ENCODE measurements at regions of chr11 and their contacts with region 1.

Region 1: DNA sequence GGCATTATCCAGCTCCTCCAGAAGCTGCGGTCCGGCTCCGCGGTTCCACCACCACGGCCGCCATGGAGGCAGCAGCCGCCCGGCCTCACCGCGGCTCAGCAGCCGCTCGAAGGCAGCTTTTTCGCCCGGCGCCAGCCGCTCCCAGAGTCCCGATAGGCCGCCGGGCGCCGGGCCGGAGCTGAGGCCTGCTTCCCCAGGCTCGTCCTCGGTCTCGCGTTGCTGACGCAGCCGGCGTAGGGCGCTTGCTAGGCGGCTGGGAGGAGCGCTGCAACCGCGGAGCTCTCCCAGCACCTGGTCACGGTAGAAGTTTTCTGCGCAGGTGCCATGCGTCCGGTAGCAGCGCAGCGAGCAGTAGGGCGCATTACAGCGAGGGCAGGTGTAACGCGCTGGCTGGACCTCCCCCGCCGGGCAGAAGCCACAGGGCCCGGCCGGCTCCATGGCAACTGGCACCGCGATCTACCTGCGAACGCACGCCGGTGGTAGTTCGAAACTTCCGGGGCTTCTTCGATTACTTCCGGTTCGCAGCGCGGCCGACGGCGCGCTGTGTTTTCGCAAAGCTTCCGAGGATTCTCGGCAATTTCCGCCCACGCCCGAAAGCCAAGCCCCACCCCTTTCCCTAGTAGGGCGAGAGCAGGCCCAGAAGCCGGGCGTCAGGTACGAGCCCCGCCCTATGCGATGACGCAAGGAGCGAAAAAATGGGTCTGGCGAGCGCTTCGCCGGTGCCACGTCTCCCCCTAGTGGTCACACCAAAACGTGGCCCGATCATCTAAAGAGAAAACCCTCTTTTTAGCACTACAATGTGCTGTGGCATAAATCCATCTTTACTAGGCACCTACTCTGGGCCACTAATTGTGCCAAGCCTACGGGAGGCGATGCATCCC is at the start of gene ZNHIT2:
- DNase-seq: peak; percentile 100
- ATAC-seq: peak; percentile 66
- H3K4me3 Mint-ChIP-seq: peak within 1 kb of the TSS; percentile 90
- H3K27ac Mint-ChIP-seq: peak within 1 kb of the TSS; percentile 97
- H3K4me1 Mint-ChIP-seq: peaks cover 63% of the 10 kb centered on the region
- H3K27me3 Mint-ChIP-seq: no peaks in the 10 kb centered on the region
- total RNA-seq, gene ZNHIT2: 11.6 to 12.4 TPM

Region 2: GRCh38 chr11:64787526-64788320 is 329.7 kb before region 1 on chr11:
- CTCF ChIA-PET with region 1: no interaction called
- POLR2A ChIA-PET with region 1: no interaction called
- DNase-seq: peak; percentile 68
- ATAC-seq: peak; percentile 54
- H3K4me3 Mint-ChIP-seq: no peak overlapping the region
- H3K27ac Mint-ChIP-seq: no peak overlapping the region
- H3K4me1 Mint-ChIP-seq: peaks cover 3% of the 10 kb centered on the region
- H3K27me3 Mint-ChIP-seq: no peaks in the 10 kb centered on the region

Region 3: GRCh38 chr11:65095974-65096806 is 21.3 kb before region 1 on chr11 and contains the start of gene VPS51:
- CTCF ChIA-PET with region 1: interaction called, 117 read pairs
- POLR2A ChIA-PET with region 1: interaction called, 16 read pairs
- DNase-seq: peak; percentile 92
- ATAC-seq: peak; percentile 97
- H3K4me3 Mint-ChIP-seq: peak within 1 kb of the TSS; percentile 93
- H3K27ac Mint-ChIP-seq: peak within 1 kb of the TSS; percentile 98
- H3K4me1 Mint-ChIP-seq: peaks cover 20% of the 10 kb centered on the region
- H3K27me3 Mint-ChIP-seq: no peaks in the 10 kb centered on the region
- total RNA-seq, gene VPS51: 116 to 131 TPM

Region 4: DNA sequence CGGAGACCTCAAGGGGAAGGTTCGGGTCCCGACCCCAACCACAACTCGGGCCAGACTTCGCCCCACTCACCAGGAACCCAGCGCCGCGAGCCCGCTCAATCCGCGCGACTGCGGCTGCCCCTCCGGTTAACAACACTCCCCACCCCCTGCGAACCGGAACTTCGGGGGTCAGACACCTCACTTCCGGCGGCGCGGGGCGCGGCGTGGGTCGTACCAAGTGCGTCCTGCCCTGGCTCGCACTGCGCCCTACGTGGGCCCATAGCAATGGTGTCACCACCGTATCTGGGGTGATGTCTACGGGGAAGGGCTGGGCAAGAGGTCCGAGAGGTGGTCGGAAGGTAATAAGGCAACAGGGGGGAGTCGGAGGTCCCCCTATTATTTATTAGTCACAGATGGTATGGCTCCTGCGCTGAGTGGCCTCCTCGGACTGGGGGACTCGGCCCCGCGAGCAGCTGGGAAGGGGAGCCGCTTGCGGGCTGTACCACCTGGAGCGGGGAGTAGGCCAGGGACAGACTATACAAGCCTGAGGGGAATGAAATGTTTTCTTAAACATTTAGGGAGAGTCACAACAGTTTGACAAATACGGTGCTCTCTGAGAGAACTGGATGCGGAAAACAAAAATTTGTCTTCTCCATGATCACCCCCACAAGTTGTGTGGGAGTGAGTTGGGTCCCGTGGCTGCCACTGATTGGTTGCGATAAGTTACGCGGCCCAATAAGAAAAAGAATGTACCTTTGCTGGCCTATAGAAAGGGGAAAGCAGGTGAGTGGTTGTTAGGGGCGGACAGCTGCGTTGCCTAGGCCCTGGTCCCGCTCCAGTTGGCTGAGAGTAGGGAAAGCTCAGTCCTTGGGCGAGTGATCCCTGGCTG is 17.2 kb after region 1 on chr11 and contains the start of gene SYVN1:
- CTCF ChIA-PET with region 1: interaction called, 19 read pairs
- POLR2A ChIA-PET with region 1: interaction called, 31 read pairs
- DNase-seq: peak; percentile 93
- ATAC-seq: peak; percentile 89
- H3K4me3 Mint-ChIP-seq: peak within 1 kb of the TSS; percentile 99
- H3K27ac Mint-ChIP-seq: peak within 1 kb of the TSS; percentile 100
- H3K4me1 Mint-ChIP-seq: peaks cover 29% of the 10 kb centered on the region
- H3K27me3 Mint-ChIP-seq: no peaks in the 10 kb centered on the region
- total RNA-seq, gene SYVN1: 28.7 to 33.0 TPM

Measured in activated CD8-positive, alpha-beta T cell treated with anti-CD3 and anti-CD28 coated beads, Interleukin-2, amount 10 ng/mL, durations not matched to agents 7 days and 5 days (primary cell).